ENCODE measurements at regions of chr22 and their contacts with region 1.

Region 1: GRCh38 chr22:36873680-36874537 is 13.1 kb downstream of the NCF4 start:
- DNase-seq: peak; percentile 40 to 73 (median 60)
- ATAC-seq: peak; percentile 81
- H3K4me3 ChIP-seq: no peak overlapping the region
- H3K27ac ChIP-seq: peak overlapping the region in 2 of 4 donors; percentile 68 to 73
- H3K4me1 ChIP-seq: peaks cover 13% of the 10 kb centered on the region
- H3K27me3 ChIP-seq: peaks cover 0 to 5% of the 10 kb centered on the region in 2 donors
- CTCF ChIP-seq: peak in 6 of 7 experiments; percentile 31 to 76 (median 63)
- POLR2A ChIP-seq: peak in 1 of 3 donors; percentile 28

Region 2: GRCh38 chr22:36331306-36331911 is 542.5 kb before region 1 on chr22:
- intact Hi-C with region 1: no loop called
- DNase-seq: peak; percentile 58 to 87 (median 76)
- ATAC-seq: peak; percentile 34
- H3K4me3 ChIP-seq: no peak overlapping the region
- H3K27ac ChIP-seq: peak overlapping the region; percentile 71 to 96 (median 89)
- H3K4me1 ChIP-seq: peaks cover 93% of the 10 kb centered on the region
- H3K27me3 ChIP-seq: no peaks in the 10 kb centered on the region
- CTCF ChIP-seq: no peak
- POLR2A ChIP-seq: peak in 2 of 3 donors; percentile 25 to 44

Region 3: GRCh38 chr22:36816636-36817524 is 57.0 kb before region 1 on chr22 and contains the start of gene PVALB:
- intact Hi-C with region 1: no loop called
- DNase-seq: peak; percentile 6 to 44 (median 24)
- ATAC-seq: peak; percentile 78
- H3K4me3 ChIP-seq: no peak within 1 kb of the TSS
- H3K27ac ChIP-seq: no peak within 1 kb of the TSS
- H3K4me1 ChIP-seq: peaks cover 21% of the 10 kb centered on the region
- H3K27me3 ChIP-seq: peaks cover 0 to 34% of the 10 kb centered on the region in 2 donors
- CTCF ChIP-seq: peak in 1 of 7 experiments; percentile 7
- POLR2A ChIP-seq: no peak
- total RNA-seq, gene PVALB: not detected

Region 4: DNA sequence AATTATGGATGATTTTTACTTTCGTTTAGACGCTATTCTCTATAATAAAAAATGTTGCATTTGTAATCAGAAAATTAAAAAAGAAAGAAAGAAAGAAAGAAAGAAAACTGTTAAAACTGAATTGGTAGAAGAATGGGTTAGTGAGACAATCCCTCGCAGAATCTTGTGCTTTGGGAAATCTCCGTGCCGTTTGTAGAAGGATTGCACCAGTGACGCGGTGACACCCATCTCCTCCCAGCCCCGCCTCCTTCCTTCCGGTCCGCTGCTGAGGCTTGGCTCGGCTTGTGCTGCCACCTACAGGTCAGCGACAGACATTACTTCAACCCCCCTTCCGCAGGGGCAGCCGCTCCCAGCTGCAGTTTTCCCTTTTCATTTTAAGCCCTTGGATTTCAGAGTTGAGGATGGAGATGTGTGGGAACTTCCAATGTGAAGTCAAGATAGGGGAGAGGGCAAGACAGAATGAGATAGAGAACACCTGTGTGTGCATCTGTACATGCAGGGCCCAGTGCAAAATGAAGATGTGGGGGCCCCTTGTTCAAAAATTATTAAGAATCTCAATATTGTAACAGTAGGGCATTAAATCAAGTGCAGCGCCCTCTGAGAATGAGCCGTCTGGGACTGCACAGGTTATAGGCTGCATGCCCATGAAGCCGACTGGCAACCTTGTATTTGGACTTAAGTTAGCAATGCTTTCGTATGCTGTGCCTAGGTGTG is 104.2 kb after region 1 on chr22:
- intact Hi-C with region 1: loop called (anchors 5 kb)
- DNase-seq: peak; percentile 91 to 93 (median 92)
- ATAC-seq: peak; percentile 98
- H3K4me3 ChIP-seq: no peak overlapping the region
- H3K27ac ChIP-seq: peak overlapping the region in 1 of 4 donors; percentile 53
- H3K4me1 ChIP-seq: peaks cover 6% of the 10 kb centered on the region
- H3K27me3 ChIP-seq: no peaks in the 10 kb centered on the region
- CTCF ChIP-seq: peak; percentile 86 to 97 (median 97)
- POLR2A ChIP-seq: no peak